OCI-LY7 (cell line): ENCODE measurements at regions of chr1 and their contacts with region 1.

Region 1: GRCh38 chr1:174159252-174160108 is at the start of gene RABGAP1L:
- DNase-seq: peak; percentile 96
- H3K4me3 ChIP-seq: peak within 1 kb of the TSS; percentile 96
- H3K27ac ChIP-seq: peak within 1 kb of the TSS; percentile 82
- H3K4me1 ChIP-seq: peaks cover 46% of the 10 kb centered on the region
- CTCF ChIP-seq: 0 out of 2 replicates have a peak, but pooled peaks have one; percentile 9
- total RNA-seq, gene RABGAP1L: 98.1 and 142 TPM in 2 replicates

Region 2: DNA sequence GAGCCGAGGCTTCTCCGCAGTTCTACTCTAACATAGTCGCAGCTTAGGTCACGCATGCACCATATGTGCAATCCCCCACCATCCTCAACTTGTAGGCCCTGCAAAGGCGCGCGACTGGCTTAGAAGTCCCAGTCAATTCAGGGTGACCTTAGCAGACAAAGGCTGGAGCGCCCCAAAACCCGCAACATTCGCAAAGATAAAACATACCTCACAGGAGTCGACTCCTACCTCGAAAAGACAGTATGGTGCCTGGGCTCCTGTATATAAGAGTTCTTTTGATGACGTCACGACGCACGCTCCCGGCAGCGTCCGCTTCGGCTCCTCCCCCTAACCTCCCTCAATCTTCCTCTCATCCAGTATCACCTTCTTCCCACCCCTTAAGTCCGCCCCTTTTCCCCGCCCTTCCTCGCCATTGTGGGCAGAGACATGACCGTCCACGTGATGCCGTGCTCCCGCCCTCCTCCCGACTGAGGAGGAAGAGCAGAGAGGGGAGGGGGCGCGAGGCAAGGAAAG is 291.7 kb before region 1 on chr1 and contains the start of gene GAS5:
- CTCF ChIA-PET with region 1: no interaction called
- POLR2A ChIA-PET with region 1: interaction called, 4 read pairs
- intact Hi-C with region 1: loop called (anchors 5 kb)
- DNase-seq: peak; percentile 99
- H3K4me3 ChIP-seq: peak within 1 kb of the TSS; percentile 98
- H3K27ac ChIP-seq: peak within 1 kb of the TSS; percentile 91
- H3K4me1 ChIP-seq: peaks cover 61% of the 10 kb centered on the region
- CTCF ChIP-seq: no peak
- total RNA-seq, gene GAS5: 899 and 1,026 TPM in 2 replicates

Region 3: DNA sequence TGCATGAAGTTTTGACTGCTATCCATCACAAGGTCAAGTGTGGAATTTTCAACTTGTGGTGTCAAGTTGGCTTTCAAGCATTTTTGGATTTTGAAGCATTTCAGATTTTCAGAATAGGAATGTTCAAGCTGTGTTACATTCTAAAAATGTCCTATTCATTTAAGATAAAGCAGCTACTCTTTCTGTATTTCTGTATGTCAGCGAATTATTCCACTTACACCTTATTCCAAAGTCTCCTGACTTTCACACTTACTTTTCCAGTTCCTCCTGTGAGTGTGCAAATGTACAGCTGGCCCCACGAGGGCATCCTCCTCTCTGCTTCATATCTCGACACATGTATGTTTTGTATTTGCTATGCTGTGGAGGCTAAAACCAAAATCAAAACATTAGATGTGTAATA is 189.2 kb before region 1 on chr1:
- CTCF ChIA-PET with region 1: no interaction called
- POLR2A ChIA-PET with region 1: no interaction called
- intact Hi-C with region 1: no loop called
- DNase-seq: no peak
- H3K4me3 ChIP-seq: no peak overlapping the region
- H3K27ac ChIP-seq: no peak overlapping the region
- H3K4me1 ChIP-seq: no peaks in the 10 kb centered on the region
- CTCF ChIP-seq: no peak

Region 4: DNA sequence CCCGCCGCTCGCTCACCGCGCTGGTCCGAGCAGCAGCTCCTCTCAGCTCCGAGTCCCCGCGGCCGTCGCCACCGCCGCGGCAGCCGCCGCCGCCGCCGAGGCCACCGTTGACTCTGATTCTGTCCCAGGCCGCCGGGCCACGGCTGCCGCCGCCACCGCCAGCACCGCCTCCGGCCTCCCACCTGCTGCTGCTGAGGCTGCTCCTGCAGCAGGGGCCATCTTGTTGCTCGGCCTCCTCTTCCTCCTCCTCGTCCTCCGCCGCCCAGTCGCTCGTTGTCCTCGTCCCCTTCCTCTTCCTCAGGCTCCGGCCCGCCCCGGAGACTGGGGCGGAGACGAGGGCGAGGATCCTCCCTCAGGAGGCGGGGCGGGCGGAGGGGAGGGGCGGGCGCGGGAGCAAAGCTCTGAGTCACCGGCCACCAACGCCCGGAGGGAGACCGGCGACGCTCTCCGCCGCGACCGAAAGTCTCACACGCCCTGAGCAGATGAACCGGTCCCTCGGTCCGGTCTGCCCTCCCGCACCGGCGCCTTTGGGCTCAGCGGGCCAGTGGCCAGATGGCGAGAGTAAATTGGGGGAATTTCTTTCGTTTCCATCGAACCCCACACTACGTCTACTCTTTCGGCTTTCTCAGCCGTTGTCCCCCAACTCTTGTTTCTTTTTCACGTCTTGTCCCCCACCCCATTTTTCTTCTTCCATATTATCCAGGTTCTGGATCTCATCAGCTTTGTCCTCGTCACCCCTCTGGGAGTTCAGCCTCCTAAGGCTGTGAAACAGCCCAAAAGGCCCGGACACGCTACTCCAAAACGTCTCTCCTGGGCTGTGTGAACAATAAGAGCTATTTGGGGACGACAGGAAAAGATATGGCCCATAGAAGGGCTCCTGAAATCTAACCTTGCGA is 137.2 kb before region 1 on chr1 and contains the start of gene RC3H1:
- CTCF ChIA-PET with region 1: no interaction called
- POLR2A ChIA-PET with region 1: no interaction called
- intact Hi-C with region 1: loop called (anchors 5 kb)
- DNase-seq: peak; percentile 91
- H3K4me3 ChIP-seq: peak within 1 kb of the TSS; percentile 89
- H3K27ac ChIP-seq: peak within 1 kb of the TSS; percentile 51
- H3K4me1 ChIP-seq: peaks cover 37% of the 10 kb centered on the region
- CTCF ChIP-seq: no peak
- total RNA-seq, gene RC3H1: 21.0 and 32.0 TPM in 2 replicates

Region 5: GRCh38 chr1:174142836-174143235 is 16.6 kb before region 1 on chr1:
- CTCF ChIA-PET with region 1: no interaction called
- POLR2A ChIA-PET with region 1: no interaction called
- intact Hi-C with region 1: no loop called
- DNase-seq: no peak
- H3K4me3 ChIP-seq: no peak overlapping the region
- H3K27ac ChIP-seq: no peak overlapping the region
- H3K4me1 ChIP-seq: no peaks in the 10 kb centered on the region
- CTCF ChIP-seq: no peak

Region 6: DNA sequence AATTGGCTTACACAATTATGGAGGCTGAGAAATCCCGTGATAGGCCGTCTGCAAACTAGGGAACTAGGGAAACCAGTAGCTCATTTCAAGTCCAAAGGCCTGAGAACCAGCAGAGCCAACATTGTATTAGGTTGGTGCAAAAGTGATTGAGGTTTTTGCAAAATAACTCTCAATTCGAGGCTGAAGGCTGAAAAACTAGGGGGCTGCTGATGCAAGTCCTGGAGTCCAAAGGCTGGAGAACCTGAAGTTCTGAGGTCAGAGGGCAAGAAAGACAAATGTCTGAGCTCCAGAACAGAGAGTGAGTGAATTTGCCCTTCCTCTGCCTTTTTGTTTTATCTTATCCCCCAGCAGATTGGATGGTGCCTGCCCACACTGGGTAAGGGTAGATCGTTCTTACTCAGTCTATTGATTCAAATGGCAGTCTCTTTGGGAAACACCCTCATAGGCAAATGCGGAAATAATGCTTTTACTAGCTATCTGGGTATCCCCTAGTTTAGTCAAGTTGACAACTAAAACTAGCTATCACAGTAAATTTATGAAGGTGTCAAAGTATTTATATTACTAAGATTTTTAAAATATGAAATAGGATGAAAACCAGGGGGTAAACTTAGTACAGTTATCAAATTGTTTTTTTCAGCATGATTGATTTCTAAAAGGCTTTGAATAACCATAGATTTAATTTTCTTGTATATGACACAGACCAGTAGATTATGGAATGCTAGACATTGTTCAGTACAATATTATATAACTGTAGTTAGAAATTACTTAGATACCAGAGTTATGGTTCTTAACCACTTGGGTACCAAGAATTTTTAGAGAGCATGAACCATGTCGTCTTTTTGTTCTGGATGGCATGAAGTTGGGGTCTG is 15.2 kb after region 1 on chr1:
- CTCF ChIA-PET with region 1: no interaction called
- POLR2A ChIA-PET with region 1: interaction called, 11 read pairs
- intact Hi-C with region 1: no loop called
- DNase-seq: no peak
- H3K4me3 ChIP-seq: no peak overlapping the region
- H3K27ac ChIP-seq: no peak overlapping the region
- H3K4me1 ChIP-seq: peaks cover 14% of the 10 kb centered on the region
- CTCF ChIP-seq: no peak

Region 7: DNA sequence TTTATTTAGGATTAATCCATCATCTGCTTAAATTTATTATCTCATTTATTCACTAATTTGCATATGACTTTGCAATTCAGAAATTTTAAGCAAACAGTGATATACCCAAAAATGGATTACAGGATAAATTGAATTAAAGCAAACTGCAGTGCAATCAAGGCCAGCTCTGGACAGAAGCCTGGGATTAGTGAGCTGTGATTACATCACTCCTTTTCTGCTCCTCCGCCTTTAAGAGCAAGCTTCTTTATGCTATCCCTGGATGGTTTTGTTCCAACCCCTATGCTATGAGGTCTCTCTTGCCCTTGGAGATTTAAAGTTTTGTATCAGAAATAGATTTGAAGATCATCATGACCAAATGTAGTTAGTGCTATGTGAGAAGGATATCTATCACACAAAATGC is 320.8 kb after region 1 on chr1:
- CTCF ChIA-PET with region 1: interaction called, 10 read pairs
- POLR2A ChIA-PET with region 1: no interaction called
- intact Hi-C with region 1: no loop called
- DNase-seq: no peak
- H3K4me3 ChIP-seq: no peak overlapping the region
- H3K27ac ChIP-seq: no peak overlapping the region
- H3K4me1 ChIP-seq: no peaks in the 10 kb centered on the region
- CTCF ChIP-seq: no peak